Activated CD4-positive, alpha-beta memory T cell treated with anti-CD3 and anti-CD28 coated beads for 36 hours (primary cell): ENCODE measurements at regions of chr17 and their contacts with region 1.

Region 1: DNA sequence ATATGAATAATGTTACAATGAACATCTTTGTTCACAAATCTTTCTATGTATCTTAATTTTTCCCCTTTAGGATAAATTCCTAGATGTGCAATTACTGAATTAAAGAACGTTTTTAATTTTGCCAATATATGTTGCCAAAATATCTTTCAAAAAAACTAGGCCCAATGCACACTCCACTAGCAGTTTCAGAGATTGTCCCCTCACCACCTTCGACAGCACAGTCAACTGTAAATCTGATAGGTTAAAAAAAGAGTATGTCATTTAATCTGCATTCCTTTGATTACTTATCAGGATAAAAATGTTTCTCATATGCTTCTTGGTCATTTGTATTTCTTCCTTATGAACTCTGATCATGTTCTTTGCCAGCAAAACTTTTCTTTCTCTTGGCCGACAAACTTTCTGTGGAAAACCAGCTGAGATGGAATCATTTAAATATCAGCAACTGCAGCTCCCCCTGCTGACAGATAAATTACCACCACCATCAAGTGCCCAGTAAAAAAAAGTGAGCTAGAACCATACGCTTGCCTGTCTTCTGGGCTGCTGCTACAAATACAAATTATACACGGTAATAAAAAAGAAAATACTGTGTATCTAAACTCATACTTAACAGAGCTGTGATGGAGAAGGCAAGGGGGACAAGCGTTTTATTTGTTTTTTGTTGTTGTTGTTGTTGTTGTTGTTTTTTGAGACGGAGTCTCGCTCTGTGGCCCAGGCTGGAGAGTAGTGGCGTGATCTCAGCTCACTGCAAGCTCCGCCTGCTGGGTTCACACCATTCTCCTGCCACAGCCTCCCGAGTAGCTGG is 19.6 kb upstream of the KANSL1 start:
- DNase-seq: peak; percentile 67
- H3K4me3 Mint-ChIP-seq: no peak overlapping the region
- H3K27ac Mint-ChIP-seq: no peak overlapping the region
- H3K4me1 Mint-ChIP-seq: peaks cover 21% of the 10 kb centered on the region
- H3K27me3 Mint-ChIP-seq: no peaks in the 10 kb centered on the region

Region 2: GRCh38 chr17:46002311-46002972 is 210.4 kb before region 1 on chr17:
- CTCF ChIA-PET with region 1: interaction called, 50 read pairs
- POLR2A ChIA-PET with region 1: no interaction called
- intact Hi-C with region 1: loop called (anchors 1 kb)
- DNase-seq: peak; percentile 82
- H3K4me3 Mint-ChIP-seq: no peak overlapping the region
- H3K27ac Mint-ChIP-seq: no peak overlapping the region
- H3K4me1 Mint-ChIP-seq: no peaks in the 10 kb centered on the region
- H3K27me3 Mint-ChIP-seq: no peaks in the 10 kb centered on the region

Region 3: DNA sequence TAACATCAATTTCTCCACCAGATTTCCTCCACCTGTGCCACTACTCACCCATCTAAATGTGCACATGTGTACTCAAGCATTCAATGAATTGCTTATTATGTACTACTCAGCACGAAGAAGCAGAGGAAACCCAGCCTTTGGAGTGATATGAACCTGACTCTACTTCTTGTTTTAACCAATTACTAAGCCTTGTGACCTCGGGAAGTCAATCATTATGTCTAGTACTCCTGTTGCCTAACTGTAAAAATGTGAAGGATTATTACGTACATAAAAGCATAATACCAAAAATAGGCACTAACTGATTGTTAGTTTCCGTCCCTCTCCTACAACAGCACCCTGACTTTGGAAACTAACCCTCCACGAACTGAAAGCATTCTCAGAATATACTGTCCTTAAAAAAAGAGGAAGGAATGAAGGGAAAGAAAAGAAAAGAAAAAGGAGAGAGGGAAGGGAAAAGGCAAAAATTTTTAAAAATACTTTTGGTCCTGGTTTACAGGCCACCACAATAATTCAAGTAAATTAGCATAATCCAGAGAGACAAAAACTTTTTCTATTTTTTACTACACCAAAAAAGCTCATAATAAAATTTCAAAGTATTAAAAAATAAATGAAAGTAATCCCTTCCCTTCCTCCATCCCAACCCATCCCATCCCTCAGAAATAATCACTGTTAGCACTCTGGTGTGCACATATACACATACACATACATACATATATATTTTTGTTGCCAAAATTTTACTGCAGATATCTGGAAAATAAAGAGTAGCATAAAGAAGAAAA is 73.2 kb before region 1 on chr17:
- CTCF ChIA-PET with region 1: no interaction called
- POLR2A ChIA-PET with region 1: no interaction called
- intact Hi-C with region 1: no loop called
- DNase-seq: no peak
- H3K4me3 Mint-ChIP-seq: no peak overlapping the region
- H3K27ac Mint-ChIP-seq: no peak overlapping the region
- H3K4me1 Mint-ChIP-seq: peaks cover 92% of the 10 kb centered on the region
- H3K27me3 Mint-ChIP-seq: no peaks in the 10 kb centered on the region

Region 4: DNA sequence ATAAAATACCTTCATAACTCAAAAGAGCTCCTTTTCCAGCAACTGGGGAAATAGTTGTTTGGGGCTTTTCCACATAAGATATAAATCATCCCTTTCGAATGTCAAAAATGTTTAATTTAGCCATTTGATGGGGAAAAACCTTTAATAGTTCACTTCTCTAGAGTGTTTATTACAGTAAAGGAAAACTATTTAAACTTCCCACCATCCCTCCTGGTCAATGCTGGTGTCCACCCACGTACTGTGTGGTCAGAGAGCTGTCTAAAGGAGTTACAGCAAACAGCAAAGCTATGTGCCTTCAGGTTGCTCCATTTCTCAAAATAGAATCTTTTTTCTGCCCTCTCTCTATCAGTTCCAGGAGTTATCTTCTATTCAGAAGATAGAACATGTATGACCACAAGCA is 53.1 kb before region 1 on chr17:
- CTCF ChIA-PET with region 1: interaction called, 12 read pairs
- POLR2A ChIA-PET with region 1: no interaction called
- intact Hi-C with region 1: no loop called
- DNase-seq: no peak
- H3K4me3 Mint-ChIP-seq: no peak overlapping the region
- H3K27ac Mint-ChIP-seq: no peak overlapping the region
- H3K4me1 Mint-ChIP-seq: peaks cover 88% of the 10 kb centered on the region
- H3K27me3 Mint-ChIP-seq: no peaks in the 10 kb centered on the region

Region 5: GRCh38 chr17:46184696-46185095 is 28.1 kb before region 1 on chr17:
- CTCF ChIA-PET with region 1: interaction called, 29 read pairs
- POLR2A ChIA-PET with region 1: no interaction called
- intact Hi-C with region 1: no loop called
- DNase-seq: no peak
- H3K4me3 Mint-ChIP-seq: no peak overlapping the region
- H3K27ac Mint-ChIP-seq: no peak overlapping the region
- H3K4me1 Mint-ChIP-seq: peaks cover 90% of the 10 kb centered on the region
- H3K27me3 Mint-ChIP-seq: no peaks in the 10 kb centered on the region

Region 6: DNA sequence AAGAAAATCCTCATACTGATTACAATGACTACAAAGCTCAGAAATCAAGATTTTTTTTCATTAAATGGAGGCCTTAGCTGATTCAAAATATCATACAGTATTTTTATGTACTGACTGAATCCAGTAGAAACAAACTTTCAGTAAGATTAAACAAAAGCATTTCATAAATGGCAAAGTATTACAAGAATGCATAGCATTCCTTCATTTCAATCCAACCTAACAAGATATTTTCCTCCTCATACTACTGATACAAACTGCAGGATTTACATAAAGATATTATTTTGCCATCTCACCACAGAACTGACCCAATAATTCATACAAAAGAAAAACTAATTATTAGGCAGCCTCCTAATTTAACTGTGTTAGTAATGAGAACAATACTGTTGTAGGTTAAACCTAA is 13.5 kb before region 1 on chr17:
- CTCF ChIA-PET with region 1: interaction called, 35 read pairs
- POLR2A ChIA-PET with region 1: no interaction called
- intact Hi-C with region 1: loop called (anchors 1 kb)
- DNase-seq: no peak
- H3K4me3 Mint-ChIP-seq: no peak overlapping the region
- H3K27ac Mint-ChIP-seq: no peak overlapping the region
- H3K4me1 Mint-ChIP-seq: peaks cover 54% of the 10 kb centered on the region
- H3K27me3 Mint-ChIP-seq: no peaks in the 10 kb centered on the region

Region 7: GRCh38 chr17:46264456-46265198 is 51.8 kb after region 1 on chr17:
- CTCF ChIA-PET with region 1: no interaction called
- POLR2A ChIA-PET with region 1: no interaction called
- intact Hi-C with region 1: no loop called
- DNase-seq: peak; percentile 44
- H3K4me3 Mint-ChIP-seq: no peak overlapping the region
- H3K27ac Mint-ChIP-seq: peak overlapping the region; percentile 14
- H3K4me1 Mint-ChIP-seq: peaks cover 32% of the 10 kb centered on the region
- H3K27me3 Mint-ChIP-seq: peaks cover 20% of the 10 kb centered on the region